Activated CD8-positive, alpha-beta memory T cell treated with anti-CD3 and anti-CD28 coated beads, Interleukin-2, amount 10 ng/mL, durations not matched to agents 7 days and 5 days (primary cell): ENCODE measurements at regions of chr4 and their contacts with region 1.

Region 1: GRCh38 chr4:121192480-121192879 is 28.4 kb upstream of the TNIP3 start:
- DNase-seq: no peak
- ATAC-seq: peak; percentile 10
- H3K4me3 Mint-ChIP-seq: peak overlapping the region; percentile 41
- H3K27ac Mint-ChIP-seq: peak overlapping the region; percentile 81
- H3K4me1 Mint-ChIP-seq: peaks cover 75% of the 10 kb centered on the region
- H3K27me3 Mint-ChIP-seq: no peaks in the 10 kb centered on the region

Region 2: DNA sequence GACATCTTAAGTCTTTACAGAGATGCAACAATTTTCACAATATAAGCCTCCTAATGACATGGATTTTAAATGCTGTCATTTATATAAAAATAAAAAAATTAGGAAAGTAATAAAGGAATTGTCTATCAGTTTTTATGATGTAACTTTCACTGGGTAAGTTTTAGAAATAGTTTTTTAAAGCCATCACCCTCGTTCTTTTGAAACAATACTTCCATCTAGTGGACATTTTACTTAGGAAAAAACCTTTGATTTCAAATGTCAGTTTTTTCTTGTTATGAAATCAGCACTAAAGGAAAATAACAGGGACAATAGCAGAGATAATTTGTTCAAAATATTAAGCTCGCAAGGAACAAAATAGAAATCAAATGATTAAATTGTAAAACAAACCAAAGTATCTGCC is 95.9 kb before region 1 on chr4:
- CTCF ChIA-PET with region 1: no interaction called
- DNase-seq: no peak
- ATAC-seq: no peak
- H3K4me3 Mint-ChIP-seq: no peak overlapping the region
- H3K27ac Mint-ChIP-seq: no peak overlapping the region
- H3K4me1 Mint-ChIP-seq: no peaks in the 10 kb centered on the region
- H3K27me3 Mint-ChIP-seq: peaks cover 3% of the 10 kb centered on the region

Region 3: GRCh38 chr4:121118344-121118743 is 74.1 kb before region 1 on chr4:
- CTCF ChIA-PET with region 1: interaction called, 12 read pairs
- DNase-seq: no peak
- ATAC-seq: peak; percentile 45
- H3K4me3 Mint-ChIP-seq: no peak overlapping the region
- H3K27ac Mint-ChIP-seq: peak overlapping the region; percentile 25
- H3K4me1 Mint-ChIP-seq: peaks cover 31% of the 10 kb centered on the region
- H3K27me3 Mint-ChIP-seq: no peaks in the 10 kb centered on the region

Region 4: DNA sequence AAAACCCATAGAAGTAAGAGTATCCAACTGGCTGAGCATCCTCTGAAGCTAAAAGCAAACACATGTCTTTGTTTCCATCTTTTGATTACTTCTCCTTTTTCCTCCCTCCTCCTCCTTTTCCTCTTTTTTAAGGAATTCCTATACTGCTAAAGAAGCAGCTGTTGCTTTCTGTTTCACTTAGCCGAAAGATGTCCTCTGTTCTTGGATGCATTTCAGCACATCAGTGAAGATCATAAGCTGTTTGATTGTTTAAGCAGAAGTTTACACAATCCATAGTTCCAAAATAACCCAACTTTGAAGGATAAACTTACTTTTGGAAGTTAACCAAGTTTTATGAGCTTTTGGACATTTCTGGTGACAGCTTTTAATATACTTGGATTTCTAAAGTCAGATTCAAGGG is 26.7 kb after region 1 on chr4:
- CTCF ChIA-PET with region 1: interaction called, 57 read pairs
- DNase-seq: no peak
- ATAC-seq: peak; percentile 18
- H3K4me3 Mint-ChIP-seq: peak overlapping the region; percentile 68
- H3K27ac Mint-ChIP-seq: peak overlapping the region; percentile 92
- H3K4me1 Mint-ChIP-seq: peaks cover 68% of the 10 kb centered on the region
- H3K27me3 Mint-ChIP-seq: no peaks in the 10 kb centered on the region

Region 5: GRCh38 chr4:121243485-121243884 is 51.0 kb after region 1 on chr4:
- CTCF ChIA-PET with region 1: interaction called, 142 read pairs
- DNase-seq: no peak
- ATAC-seq: peak; percentile 74
- H3K4me3 Mint-ChIP-seq: peak overlapping the region; percentile 73
- H3K27ac Mint-ChIP-seq: peak overlapping the region; percentile 77
- H3K4me1 Mint-ChIP-seq: peaks cover 33% of the 10 kb centered on the region
- H3K27me3 Mint-ChIP-seq: no peaks in the 10 kb centered on the region

Region 6: GRCh38 chr4:121307445-121308327 is 115.2 kb after region 1 on chr4:
- CTCF ChIA-PET with region 1: interaction called, 78 read pairs
- DNase-seq: peak; percentile 74
- ATAC-seq: peak; percentile 83
- H3K4me3 Mint-ChIP-seq: peak overlapping the region; percentile 27
- H3K27ac Mint-ChIP-seq: peak overlapping the region; percentile 86
- H3K4me1 Mint-ChIP-seq: peaks cover 27% of the 10 kb centered on the region
- H3K27me3 Mint-ChIP-seq: peaks cover 2% of the 10 kb centered on the region